AG04450 (cell line): ENCODE measurements at regions of chr17 and their contacts with region 1.

Region 1: GRCh38 chr17:69335058-69335457 is 8.1 kb upstream of the ABCA5 start:
- DNase-seq: no peak
- H3K4me3 ChIP-seq: no peak overlapping the region
- H3K27ac ChIP-seq: no peak overlapping the region
- H3K27me3 ChIP-seq: no peaks in the 10 kb centered on the region
- CTCF ChIP-seq: peak; percentile 49

Region 2: GRCh38 chr17:69287168-69287567 is 47.9 kb before region 1 on chr17:
- CTCF ChIA-PET with region 1: no interaction called
- POLR2A ChIA-PET with region 1: no interaction called
- DNase-seq: no peak
- H3K4me3 ChIP-seq: no peak overlapping the region
- H3K27ac ChIP-seq: no peak overlapping the region
- H3K27me3 ChIP-seq: no peaks in the 10 kb centered on the region
- CTCF ChIP-seq: no peak

Region 3: GRCh38 chr17:69404382-69404781 is 69.3 kb after region 1 on chr17:
- CTCF ChIA-PET with region 1: interaction called, 13 read pairs
- POLR2A ChIA-PET with region 1: no interaction called
- DNase-seq: no peak
- H3K4me3 ChIP-seq: no peak overlapping the region
- H3K27ac ChIP-seq: no peak overlapping the region
- H3K27me3 ChIP-seq: no peaks in the 10 kb centered on the region
- CTCF ChIP-seq: no peak

Region 4: GRCh38 chr17:69516911-69517310 is 181.9 kb after region 1 on chr17:
- CTCF ChIA-PET with region 1: interaction called, 80 read pairs
- POLR2A ChIA-PET with region 1: no interaction called
- DNase-seq: no peak
- H3K4me3 ChIP-seq: no peak overlapping the region
- H3K27ac ChIP-seq: no peak overlapping the region
- H3K27me3 ChIP-seq: no peaks in the 10 kb centered on the region
- CTCF ChIP-seq: no peak